Activated naive CD4-positive, alpha-beta T cell treated with anti-CD3 and anti-CD28 coated beads for 36 hours (primary cell): ENCODE measurements at regions of chr7 and their contacts with region 1.

Region 1: GRCh38 chr7:131068604-131069021 is 259.1 kb upstream of the MKLN1 start:
- DNase-seq: no peak
- H3K4me3 Mint-ChIP-seq: no peak overlapping the region
- H3K27ac Mint-ChIP-seq: peak overlapping the region; percentile 86
- H3K4me1 Mint-ChIP-seq: peaks cover 73% of the 10 kb centered on the region
- H3K27me3 Mint-ChIP-seq: no peaks in the 10 kb centered on the region

Region 2: GRCh38 chr7:131087756-131088658 is 19.4 kb after region 1 on chr7:
- CTCF ChIA-PET with region 1: interaction called, 13 read pairs
- intact Hi-C with region 1: no loop called
- DNase-seq: no peak
- H3K4me3 Mint-ChIP-seq: no peak overlapping the region
- H3K27ac Mint-ChIP-seq: no peak overlapping the region
- H3K4me1 Mint-ChIP-seq: peaks cover 67% of the 10 kb centered on the region
- H3K27me3 Mint-ChIP-seq: no peaks in the 10 kb centered on the region

Region 3: DNA sequence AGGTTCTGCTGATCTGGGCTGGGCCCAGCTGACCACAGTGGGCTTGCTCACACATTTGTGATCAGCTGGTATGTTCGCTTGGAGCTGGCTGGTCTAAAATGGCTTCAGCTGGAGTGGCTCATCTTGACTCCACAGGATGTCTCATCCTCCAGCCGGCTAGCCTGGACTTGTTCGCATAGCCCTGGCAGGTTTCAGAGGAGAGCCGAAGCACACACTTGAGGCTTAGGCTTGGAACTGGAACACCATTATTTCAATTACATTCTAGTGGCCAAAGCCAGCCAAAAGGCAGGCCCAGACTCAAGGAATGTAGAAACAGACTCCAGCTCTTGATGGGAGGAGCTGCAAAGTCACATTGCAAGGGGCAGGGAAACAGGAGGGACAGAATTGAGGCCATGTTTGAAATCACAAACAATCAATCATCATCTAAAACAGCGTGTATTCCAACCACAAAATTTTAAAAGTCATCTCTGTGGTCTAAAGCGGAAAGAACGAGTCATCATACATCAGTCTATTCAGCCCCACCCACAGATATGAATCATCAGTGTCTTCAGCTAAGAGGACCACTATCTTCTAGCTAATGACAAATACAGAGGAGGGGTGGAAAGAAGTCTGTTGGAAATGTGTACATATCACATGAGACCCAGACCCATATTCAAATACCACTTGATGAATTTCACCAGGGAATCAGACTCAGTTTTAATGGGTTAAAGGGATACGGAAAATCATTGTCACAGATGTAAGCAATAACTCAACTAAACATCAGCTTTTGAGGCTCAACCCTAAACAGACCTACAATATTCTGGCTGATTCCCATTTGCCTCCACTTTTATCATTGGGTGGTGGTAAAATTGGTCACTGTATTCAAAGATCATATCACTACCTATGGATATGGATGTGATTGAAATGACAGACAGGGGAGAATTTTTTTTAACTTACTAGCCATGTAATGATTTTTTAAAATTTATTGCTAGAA is 120.0 kb after region 1 on chr7:
- CTCF ChIA-PET with region 1: no interaction called
- intact Hi-C with region 1: loop called (anchors 1 kb)
- DNase-seq: peak; percentile 70
- H3K4me3 Mint-ChIP-seq: no peak overlapping the region
- H3K27ac Mint-ChIP-seq: peak overlapping the region; percentile 89
- H3K4me1 Mint-ChIP-seq: peaks cover 51% of the 10 kb centered on the region
- H3K27me3 Mint-ChIP-seq: no peaks in the 10 kb centered on the region

Region 4: GRCh38 chr7:131302876-131303707 is 234.5 kb after region 1 on chr7:
- CTCF ChIA-PET with region 1: interaction called, 6 read pairs
- intact Hi-C with region 1: loop called (anchors 1 kb)
- DNase-seq: peak; percentile 53
- H3K4me3 Mint-ChIP-seq: no peak overlapping the region
- H3K27ac Mint-ChIP-seq: no peak overlapping the region
- H3K4me1 Mint-ChIP-seq: peaks cover 5% of the 10 kb centered on the region
- H3K27me3 Mint-ChIP-seq: no peaks in the 10 kb centered on the region

Region 5: GRCh38 chr7:131424219-131424822 is 355.7 kb after region 1 on chr7:
- CTCF ChIA-PET with region 1: interaction called, 5 read pairs
- intact Hi-C with region 1: loop called (anchors 1 kb)
- DNase-seq: peak; percentile 8
- H3K4me3 Mint-ChIP-seq: no peak overlapping the region
- H3K27ac Mint-ChIP-seq: no peak overlapping the region
- H3K4me1 Mint-ChIP-seq: peaks cover 13% of the 10 kb centered on the region
- H3K27me3 Mint-ChIP-seq: no peaks in the 10 kb centered on the region

Region 6: DNA sequence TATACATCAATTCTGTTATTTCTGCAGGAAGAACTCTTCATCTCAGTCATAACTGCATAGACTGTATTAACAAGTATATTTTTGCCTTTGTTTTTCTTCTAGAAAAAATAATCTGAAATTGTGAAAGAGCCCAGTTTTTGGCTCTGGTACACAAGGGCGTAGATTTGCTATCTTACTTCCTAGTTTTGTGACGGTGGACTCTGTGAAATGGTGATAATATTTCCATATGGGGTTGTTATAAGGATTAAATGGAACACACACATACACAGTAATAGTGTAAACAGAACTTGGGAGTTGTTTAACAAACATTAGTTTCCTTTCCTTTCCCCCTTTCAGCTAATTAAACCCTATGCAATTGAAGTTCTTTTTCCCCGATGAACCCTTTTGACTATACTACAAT is 367.8 kb after region 1 on chr7:
- CTCF ChIA-PET with region 1: no interaction called
- intact Hi-C with region 1: no loop called
- DNase-seq: no peak
- H3K4me3 Mint-ChIP-seq: no peak overlapping the region
- H3K27ac Mint-ChIP-seq: no peak overlapping the region
- H3K4me1 Mint-ChIP-seq: peaks cover 6% of the 10 kb centered on the region
- H3K27me3 Mint-ChIP-seq: no peaks in the 10 kb centered on the region